ENCODE measurements at regions of chr18 and their contacts with region 1.

Region 1: GRCh38 chr18:42028247-42028832 is 73.3 kb downstream of the PIK3C3 start:
- DNase-seq: peak; percentile 38
- H3K4me3 Mint-ChIP-seq: no peak overlapping the region
- H3K27ac Mint-ChIP-seq: no peak overlapping the region
- H3K4me1 Mint-ChIP-seq: no peaks in the 10 kb centered on the region
- H3K27me3 Mint-ChIP-seq: no peaks in the 10 kb centered on the region
- CTCF ChIP-seq: peak; percentile 38

Region 2: GRCh38 chr18:41992066-41992465 is 36.3 kb before region 1 on chr18:
- CTCF ChIA-PET with region 1: interaction called, 10 read pairs
- POLR2A ChIA-PET with region 1: no interaction called
- intact Hi-C with region 1: no loop called
- DNase-seq: no peak
- H3K4me3 Mint-ChIP-seq: no peak overlapping the region
- H3K27ac Mint-ChIP-seq: no peak overlapping the region
- H3K4me1 Mint-ChIP-seq: no peaks in the 10 kb centered on the region
- H3K27me3 Mint-ChIP-seq: no peaks in the 10 kb centered on the region
- CTCF ChIP-seq: no peak

Region 3: GRCh38 chr18:42038936-42039335 is 10.6 kb after region 1 on chr18:
- CTCF ChIA-PET with region 1: interaction called, 54 read pairs
- POLR2A ChIA-PET with region 1: interaction called, 3 read pairs
- intact Hi-C with region 1: no loop called
- DNase-seq: no peak
- H3K4me3 Mint-ChIP-seq: no peak overlapping the region
- H3K27ac Mint-ChIP-seq: no peak overlapping the region
- H3K4me1 Mint-ChIP-seq: no peaks in the 10 kb centered on the region
- H3K27me3 Mint-ChIP-seq: no peaks in the 10 kb centered on the region
- CTCF ChIP-seq: no peak

Region 4: GRCh38 chr18:42048150-42048549 is 19.8 kb after region 1 on chr18:
- CTCF ChIA-PET with region 1: interaction called, 13 read pairs
- POLR2A ChIA-PET with region 1: interaction called, 3 read pairs
- intact Hi-C with region 1: no loop called
- DNase-seq: peak; percentile 92
- H3K4me3 Mint-ChIP-seq: no peak overlapping the region
- H3K27ac Mint-ChIP-seq: no peak overlapping the region
- H3K4me1 Mint-ChIP-seq: peaks cover 12% of the 10 kb centered on the region
- H3K27me3 Mint-ChIP-seq: no peaks in the 10 kb centered on the region
- CTCF ChIP-seq: no peak

Region 5: DNA sequence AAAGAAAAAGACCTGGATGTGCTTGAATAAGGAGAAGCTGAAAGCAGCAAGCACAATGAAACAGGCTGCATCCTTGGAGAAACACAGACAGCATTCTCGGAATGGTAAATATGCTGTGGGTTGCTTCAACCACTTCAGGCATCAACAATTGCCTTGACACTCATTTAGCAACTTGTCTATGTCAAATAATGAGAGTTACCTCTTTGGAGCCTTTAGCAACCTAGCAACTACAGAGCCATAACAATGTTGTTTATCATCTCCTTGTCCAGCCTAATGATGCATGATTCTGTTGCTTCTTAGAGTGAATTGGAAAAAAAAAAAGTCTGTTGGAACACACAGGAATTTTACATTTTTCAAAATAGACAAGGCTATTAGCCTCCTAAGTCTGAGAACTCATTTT is 337.3 kb after region 1 on chr18:
- CTCF ChIA-PET with region 1: no interaction called
- POLR2A ChIA-PET with region 1: no interaction called
- intact Hi-C with region 1: no loop called
- DNase-seq: no peak
- H3K4me3 Mint-ChIP-seq: no peak overlapping the region
- H3K27ac Mint-ChIP-seq: no peak overlapping the region
- H3K4me1 Mint-ChIP-seq: no peaks in the 10 kb centered on the region
- H3K27me3 Mint-ChIP-seq: no peaks in the 10 kb centered on the region
- CTCF ChIP-seq: no peak

Measured in MCF 10A (cell line).